Caco-2 (cell line): ENCODE measurements at regions of chr7 and their contacts with region 1.

Region 1: GRCh38 chr7:140479062-140479738 is at the start of gene MKRN1:
- DNase-seq: peak; percentile 98
- H3K4me3 ChIP-seq: peak within 1 kb of the TSS; percentile 99
- H3K4me3 Mint-ChIP-seq: peak within 1 kb of the TSS; percentile 79
- H3K27ac Mint-ChIP-seq: peak within 1 kb of the TSS; percentile 84
- H3K4me1 ChIP-seq: no peaks in the 10 kb centered on the region
- H3K4me1 Mint-ChIP-seq: peaks cover 6% of the 10 kb centered on the region
- H3K27me3 ChIP-seq: no peaks in the 10 kb centered on the region
- H3K27me3 Mint-ChIP-seq: no peaks in the 10 kb centered on the region
- CTCF ChIP-seq: no peak
- total RNA-seq, gene MKRN1: 62.4 and 73.0 TPM in 2 replicates

Region 2: DNA sequence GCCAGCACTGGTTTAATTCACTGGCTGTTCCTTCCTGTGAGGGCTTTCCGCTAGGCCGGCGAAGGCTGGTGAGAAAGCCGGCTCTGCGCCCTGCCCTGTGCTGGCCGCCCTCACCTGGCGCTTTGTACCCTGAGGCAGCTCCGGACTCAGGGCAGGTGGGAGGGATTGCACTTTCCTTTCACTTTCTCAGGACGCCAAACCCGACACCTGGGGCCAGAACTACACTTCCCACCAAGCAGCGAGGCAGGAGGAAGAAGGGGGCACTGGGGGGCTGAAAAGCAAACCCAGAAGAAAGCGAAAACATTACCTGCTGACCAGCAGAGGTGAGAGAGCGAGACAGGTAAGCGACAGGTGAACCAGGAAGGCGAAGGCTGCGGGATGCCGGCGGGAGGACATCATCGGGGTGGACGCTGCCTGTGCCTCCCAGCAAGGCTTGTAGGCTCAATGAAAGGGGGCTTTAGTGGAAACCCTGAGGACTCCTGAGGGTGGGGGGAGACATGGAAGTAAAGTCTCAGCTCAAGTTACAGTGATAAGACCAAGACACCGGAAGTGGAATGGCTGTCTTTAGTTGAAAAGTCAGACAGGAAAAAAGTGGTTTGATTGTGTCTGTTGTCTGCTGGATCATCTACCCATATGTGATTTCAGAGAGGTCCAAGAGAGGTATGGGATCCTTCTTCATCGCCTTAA is 75.2 kb before region 1 on chr7 and contains the start of gene RAB19:
- CTCF ChIA-PET with region 1: no interaction called
- POLR2A ChIA-PET with region 1: no interaction called
- intact Hi-C with region 1: loop called (anchors 5 kb)
- DNase-seq: peak; percentile 68 to 72
- H3K4me3 ChIP-seq: peak within 1 kb of the TSS; percentile 57
- H3K4me3 Mint-ChIP-seq: peak within 1 kb of the TSS; percentile 98
- H3K27ac Mint-ChIP-seq: peak within 1 kb of the TSS; percentile 87
- H3K4me1 ChIP-seq: peaks cover 6% of the 10 kb centered on the region
- H3K4me1 Mint-ChIP-seq: peaks cover 16% of the 10 kb centered on the region
- H3K27me3 ChIP-seq: no peaks in the 10 kb centered on the region
- H3K27me3 Mint-ChIP-seq: no peaks in the 10 kb centered on the region
- CTCF ChIP-seq: no peak
- total RNA-seq, gene RAB19: 3.8 and 4.1 TPM in 2 replicates

Region 3: DNA sequence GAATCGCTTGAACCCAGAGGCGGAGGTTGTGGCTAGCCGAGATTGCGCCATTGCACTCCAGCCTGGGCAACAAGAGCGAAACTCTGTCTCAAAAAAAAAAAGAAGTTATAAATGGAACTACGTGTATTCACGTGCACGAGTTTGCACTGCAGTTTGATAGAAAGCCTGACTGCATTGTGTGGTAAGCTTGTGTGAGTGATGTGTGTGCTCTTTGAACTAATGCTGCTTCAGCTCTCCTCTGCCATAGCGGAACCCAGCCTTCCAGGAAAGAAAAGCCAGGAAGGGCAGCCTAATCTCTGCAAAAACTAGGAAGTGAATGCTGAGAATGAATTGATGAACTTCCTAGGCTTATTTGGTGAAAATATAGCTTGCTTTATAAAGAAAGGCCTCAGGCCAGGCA is 15.7 kb after region 1 on chr7:
- CTCF ChIA-PET with region 1: interaction called, 4 read pairs
- POLR2A ChIA-PET with region 1: interaction called, 7 read pairs
- intact Hi-C with region 1: loop called (anchors 1 kb)
- DNase-seq: no peak
- H3K4me3 ChIP-seq: no peak overlapping the region
- H3K4me3 Mint-ChIP-seq: no peak overlapping the region
- H3K27ac Mint-ChIP-seq: no peak overlapping the region
- H3K4me1 ChIP-seq: no peaks in the 10 kb centered on the region
- H3K4me1 Mint-ChIP-seq: no peaks in the 10 kb centered on the region
- H3K27me3 ChIP-seq: no peaks in the 10 kb centered on the region
- H3K27me3 Mint-ChIP-seq: no peaks in the 10 kb centered on the region
- CTCF ChIP-seq: no peak

Region 4: GRCh38 chr7:140517546-140518369 is 38.6 kb after region 1 on chr7:
- CTCF ChIA-PET with region 1: interaction called, 10 read pairs
- POLR2A ChIA-PET with region 1: interaction called, 7 read pairs
- intact Hi-C with region 1: no loop called
- DNase-seq: peak; percentile 90
- H3K4me3 ChIP-seq: no peak overlapping the region
- H3K4me3 Mint-ChIP-seq: no peak overlapping the region
- H3K27ac Mint-ChIP-seq: no peak overlapping the region
- H3K4me1 ChIP-seq: no peaks in the 10 kb centered on the region
- H3K4me1 Mint-ChIP-seq: no peaks in the 10 kb centered on the region
- H3K27me3 ChIP-seq: no peaks in the 10 kb centered on the region
- H3K27me3 Mint-ChIP-seq: no peaks in the 10 kb centered on the region
- CTCF ChIP-seq: peak; percentile 88 to 93

Region 5: GRCh38 chr7:140623980-140624379 is 144.8 kb after region 1 on chr7:
- CTCF ChIA-PET with region 1: no interaction called
- POLR2A ChIA-PET with region 1: no interaction called
- intact Hi-C with region 1: no loop called
- DNase-seq: no peak
- H3K4me3 ChIP-seq: no peak overlapping the region
- H3K4me3 Mint-ChIP-seq: no peak overlapping the region
- H3K27ac Mint-ChIP-seq: peak overlapping the region; percentile 29
- H3K4me1 ChIP-seq: peaks cover 6% of the 10 kb centered on the region; the same call in 1 of the 2 replicates
- H3K4me1 Mint-ChIP-seq: no peaks in the 10 kb centered on the region
- H3K27me3 ChIP-seq: no peaks in the 10 kb centered on the region
- H3K27me3 Mint-ChIP-seq: no peaks in the 10 kb centered on the region
- CTCF ChIP-seq: no peak

Region 6: DNA sequence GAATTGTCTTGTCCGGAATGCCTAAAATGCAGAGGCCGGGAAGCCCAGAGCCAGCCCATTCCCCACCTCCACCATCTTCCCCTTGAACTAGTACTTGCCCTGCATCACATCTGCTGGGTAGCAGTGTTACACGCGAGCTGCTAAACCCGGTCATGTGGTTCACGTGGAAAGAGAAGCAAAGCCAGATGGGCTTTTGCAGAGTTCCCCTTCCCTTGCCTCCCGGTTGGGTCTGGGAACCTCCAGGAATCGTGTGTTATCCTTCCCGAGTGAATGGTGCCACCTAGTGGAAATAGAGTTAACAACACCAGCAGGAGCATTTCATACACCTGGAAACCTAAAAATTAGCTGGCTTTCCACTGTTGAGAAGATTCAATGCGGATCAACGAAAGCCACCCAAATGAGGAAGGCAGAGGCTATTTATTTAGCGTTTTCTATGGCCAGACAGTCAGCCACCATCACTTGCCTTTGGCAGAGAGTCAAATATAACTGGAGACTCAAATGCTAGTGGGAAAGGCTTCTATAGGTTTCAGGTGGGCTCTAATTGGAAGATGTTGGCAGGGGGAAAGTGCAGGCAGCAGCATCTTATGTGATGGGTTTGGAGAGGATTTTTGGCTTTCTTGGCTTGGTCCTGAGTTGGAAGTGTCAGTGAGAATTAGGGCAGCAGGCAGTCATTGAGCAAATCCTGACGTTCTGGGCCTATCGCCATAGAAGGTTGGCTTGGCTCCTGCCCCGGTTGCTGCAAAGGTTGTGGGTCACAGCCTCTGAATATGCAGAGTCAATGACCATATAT is 174.3 kb after region 1 on chr7:
- CTCF ChIA-PET with region 1: no interaction called
- POLR2A ChIA-PET with region 1: no interaction called
- intact Hi-C with region 1: loop called (anchors 1 kb)
- DNase-seq: peak; percentile 71 to 80
- H3K4me3 ChIP-seq: no peak overlapping the region
- H3K4me3 Mint-ChIP-seq: no peak overlapping the region
- H3K27ac Mint-ChIP-seq: no peak overlapping the region
- H3K4me1 ChIP-seq: peaks cover 9% of the 10 kb centered on the region
- H3K4me1 Mint-ChIP-seq: peaks cover 12% of the 10 kb centered on the region
- H3K27me3 ChIP-seq: no peaks in the 10 kb centered on the region
- H3K27me3 Mint-ChIP-seq: no peaks in the 10 kb centered on the region
- CTCF ChIP-seq: peak; percentile 80 to 82